WTC11 (cell line): ENCODE measurements at regions of chr17 and their contacts with region 1.

Region 1: DNA sequence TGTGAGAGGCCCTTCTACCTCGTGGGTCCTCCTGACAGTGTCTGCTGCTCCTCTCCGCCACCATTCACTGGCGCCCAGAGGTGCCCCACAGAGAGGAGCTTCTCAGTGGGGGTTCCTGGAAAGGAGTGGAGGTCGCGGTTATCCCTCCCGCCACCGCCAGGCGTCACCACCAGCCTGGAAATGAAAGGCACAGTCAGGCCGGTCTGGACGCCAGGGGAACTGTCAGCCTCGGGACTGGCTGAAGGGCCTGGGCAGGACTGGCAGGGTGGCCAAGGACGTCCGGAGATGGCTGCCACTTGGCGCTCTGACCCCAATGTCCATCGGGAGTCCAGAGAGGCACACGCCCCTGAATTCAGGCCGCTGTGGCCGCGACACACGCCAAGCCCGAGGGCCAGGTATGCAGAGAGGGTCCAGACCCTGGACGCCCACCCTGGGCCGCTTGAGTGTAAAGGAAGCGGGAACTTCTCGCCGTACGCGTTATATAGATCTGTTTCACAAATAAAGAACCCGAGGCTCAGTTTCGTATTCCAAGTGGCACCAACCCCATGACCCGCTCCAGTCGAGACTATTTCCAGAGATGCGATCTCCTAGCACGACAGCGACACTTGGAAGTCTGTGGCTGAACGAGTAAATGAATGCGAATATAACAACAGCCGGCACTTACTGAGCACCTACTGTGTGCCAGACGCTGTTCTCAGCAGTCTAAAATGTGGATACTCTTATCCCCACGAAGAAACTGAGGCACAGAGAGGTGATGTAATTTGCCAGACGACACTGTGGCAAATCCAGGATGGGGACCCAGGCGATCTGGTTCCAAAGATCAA is 7.6 kb upstream of the NXPH3 start:
- DNase-seq: peak; percentile 92
- ATAC-seq: peak; percentile 63
- H3K4me3 Mint-ChIP-seq: peak overlapping the region; percentile 69
- H3K27ac Mint-ChIP-seq: peak overlapping the region; percentile 32; the same call in 1 of the 2 replicates
- H3K4me1 Mint-ChIP-seq: peaks cover 29% of the 10 kb centered on the region
- H3K27me3 Mint-ChIP-seq: peaks cover 14% of the 10 kb centered on the region
- CTCF ChIP-seq: peak; percentile 97

Region 2: DNA sequence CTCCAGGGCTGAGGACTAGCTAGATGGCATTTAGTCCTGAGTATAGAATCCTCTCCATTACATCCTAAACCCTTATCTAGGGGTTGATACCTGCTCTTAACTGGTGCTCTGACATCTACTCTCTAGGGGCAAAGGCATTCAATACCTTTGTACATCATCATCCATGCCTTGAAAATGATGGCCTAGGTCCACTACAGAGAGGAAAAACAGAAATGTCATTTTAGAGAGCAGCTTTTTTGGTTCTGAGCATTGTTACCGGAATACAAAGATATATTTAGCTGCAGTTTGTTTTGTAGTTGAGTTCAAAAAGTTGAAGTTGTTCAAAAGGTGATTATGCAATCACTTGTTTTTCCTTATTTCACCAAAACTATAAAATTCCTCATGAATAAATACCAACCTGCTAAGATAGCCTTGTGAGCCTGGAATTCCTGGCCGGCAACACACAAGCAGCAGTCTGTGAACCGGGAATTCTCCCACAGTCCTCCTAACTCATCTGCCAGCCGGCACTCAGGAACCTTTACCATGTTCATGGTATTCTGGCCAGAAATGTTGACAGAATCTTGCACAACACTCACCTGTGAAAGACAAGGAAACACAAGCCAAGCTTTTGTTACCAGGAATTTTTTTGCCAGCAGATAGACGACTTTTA is 42.9 kb after region 1 on chr17:
- CTCF ChIA-PET with region 1: no interaction called
- POLR2A ChIA-PET with region 1: no interaction called
- DNase-seq: no peak
- ATAC-seq: no peak
- H3K4me3 Mint-ChIP-seq: no peak overlapping the region
- H3K27ac Mint-ChIP-seq: no peak overlapping the region
- H3K4me1 Mint-ChIP-seq: no peaks in the 10 kb centered on the region
- H3K27me3 Mint-ChIP-seq: no peaks in the 10 kb centered on the region
- CTCF ChIP-seq: no peak

Region 3: GRCh38 chr17:49687878-49688491 is 119.9 kb after region 1 on chr17:
- CTCF ChIA-PET with region 1: interaction called, 99 read pairs
- POLR2A ChIA-PET with region 1: no interaction called
- DNase-seq: no peak
- ATAC-seq: no peak
- H3K4me3 Mint-ChIP-seq: no peak overlapping the region
- H3K27ac Mint-ChIP-seq: no peak overlapping the region
- H3K4me1 Mint-ChIP-seq: peaks cover 23% of the 10 kb centered on the region
- H3K27me3 Mint-ChIP-seq: peaks cover 2% of the 10 kb centered on the region; the same call in 1 of the 2 replicates
- CTCF ChIP-seq: no peak

Region 4: DNA sequence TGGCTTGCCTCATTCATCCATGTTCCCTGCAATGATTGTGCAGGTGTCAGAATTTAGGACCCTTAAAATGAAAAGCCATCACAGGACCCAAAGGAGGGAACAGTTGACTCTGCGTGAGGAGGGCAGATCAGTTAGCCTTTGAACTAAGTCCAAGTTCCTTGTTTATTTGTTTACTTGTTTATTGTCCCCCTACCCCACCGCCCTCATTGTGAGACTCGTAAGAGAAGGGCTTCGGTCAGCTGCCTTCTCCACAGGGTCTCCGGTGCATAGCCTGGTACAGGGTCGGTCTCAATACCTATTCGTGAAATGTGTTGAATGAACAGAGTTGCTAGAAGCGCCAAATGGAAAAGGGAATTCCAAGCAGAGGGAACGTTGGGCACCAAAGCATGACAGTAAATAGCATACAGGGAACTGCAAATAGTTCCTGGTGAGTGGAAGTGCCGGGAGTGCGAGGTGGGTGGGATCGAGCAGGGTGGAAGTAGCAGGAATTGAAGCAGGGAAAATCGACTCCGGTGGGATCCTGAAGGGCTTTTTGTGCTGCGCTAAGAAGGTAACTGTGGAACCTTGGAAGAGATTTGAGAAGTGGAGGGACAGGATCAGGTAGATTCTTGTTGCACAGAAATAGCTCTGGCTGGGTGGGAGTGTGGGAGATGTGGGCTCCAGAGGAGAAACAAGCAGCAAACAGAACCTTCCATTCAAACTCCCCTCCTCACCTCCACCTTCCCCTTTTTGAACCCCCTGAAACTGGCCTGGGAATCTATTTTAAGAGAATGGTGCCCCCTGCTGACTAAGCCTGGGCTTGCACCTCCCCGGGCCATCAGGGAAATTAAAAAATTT is 127.0 kb after region 1 on chr17:
- CTCF ChIA-PET with region 1: interaction called, 99 read pairs
- POLR2A ChIA-PET with region 1: no interaction called
- DNase-seq: peak; percentile 70
- ATAC-seq: peak; percentile 62
- H3K4me3 Mint-ChIP-seq: peak overlapping the region; percentile 46
- H3K27ac Mint-ChIP-seq: no peak overlapping the region
- H3K4me1 Mint-ChIP-seq: peaks cover 21% of the 10 kb centered on the region
- H3K27me3 Mint-ChIP-seq: no peaks in the 10 kb centered on the region; the same call in 1 of the 2 replicates
- CTCF ChIP-seq: peak; percentile 86